Posterior cingulate gyrus (tissue), 11 donors: ENCODE measurements at regions of chr19 and their contacts with region 1.

Region 1: GRCh38 chr19:32339988-32340874 is 5.2 kb upstream of the ZNF507 start:
- DNase-seq: peak; percentile 43 to 93 (median 72)

Region 2: DNA sequence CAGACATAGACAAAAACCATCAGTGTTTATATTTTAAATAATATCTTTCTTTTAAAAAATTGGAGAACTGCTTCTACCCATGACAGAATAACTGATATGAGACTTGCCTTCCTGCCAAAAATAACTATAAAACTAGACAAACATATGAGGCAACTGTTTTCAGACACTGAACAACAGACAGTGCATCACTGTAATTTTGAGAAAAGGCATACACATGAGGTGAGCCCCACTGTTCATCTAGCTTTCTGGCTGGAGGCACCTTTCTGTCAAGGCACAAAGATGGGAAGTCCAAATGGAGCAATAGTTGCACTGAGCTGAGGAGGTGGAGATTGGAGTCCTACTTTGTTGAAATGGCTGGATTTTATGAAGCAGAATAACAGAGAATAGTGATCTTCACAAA is 66.7 kb before region 1 on chr19:
- intact Hi-C with region 1: no loop called
- DNase-seq: no peak

Region 3: DNA sequence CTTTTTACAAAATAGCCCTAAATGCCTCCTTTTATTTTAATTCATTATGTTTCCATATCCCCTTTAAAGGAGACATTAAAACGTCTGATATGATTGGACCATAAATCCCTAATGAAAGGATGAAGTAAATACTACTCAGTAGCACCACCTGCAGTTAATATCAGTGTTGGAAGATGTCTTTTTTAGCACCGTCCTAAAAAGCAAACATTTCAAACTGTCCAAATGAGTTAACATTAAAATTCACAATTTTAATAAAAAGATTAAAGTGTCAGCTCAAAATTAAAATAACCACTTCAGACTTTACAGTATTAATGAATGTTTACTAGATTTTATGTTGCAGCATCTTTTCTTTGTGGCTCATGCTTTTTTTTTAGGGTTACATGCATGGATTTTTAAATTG is 17.5 kb after region 1 on chr19:
- intact Hi-C with region 1: no loop called
- DNase-seq: no peak

Region 4: GRCh38 chr19:32373585-32374295 is 33.5 kb after region 1 on chr19:
- intact Hi-C with region 1: loop called (anchors 5 kb)
- DNase-seq: peak in 1 of 10 donors; percentile 23

Region 5: GRCh38 chr19:32580901-32581703 is 240.9 kb after region 1 on chr19 and contains the start of gene PDCD5:
- intact Hi-C with region 1: loop called (anchors 5 kb)
- DNase-seq: peak; percentile 90 to 99 (median 96)